Gastrocnemius medialis (tissue), 4 donors: ENCODE measurements at regions of chr1 and their contacts with region 1.

Region 1: GRCh38 chr1:224356685-224357625 is at the start of gene CNIH4:
- DNase-seq: peak; percentile 90 to 93
- ATAC-seq: peak; percentile 98
- H3K4me3 ChIP-seq: peak within 1 kb of the TSS; percentile 72 to 89 (median 88)
- H3K27ac ChIP-seq: peak within 1 kb of the TSS; percentile 85 to 95 (median 89)
- H3K4me1 ChIP-seq: peaks cover 23 to 33% of the 10 kb centered on the region in 2 donors
- H3K27me3 ChIP-seq: no peaks in the 10 kb centered on the region
- CTCF ChIP-seq: no peak
- POLR2A ChIP-seq: peak; percentile 93 to 94
- total RNA-seq, gene CNIH4: 24.5 to 58.5 (median 39.1) TPM

Region 2: GRCh38 chr1:224182866-224183590 is 173.9 kb before region 1 on chr1 and contains the start of gene DEGS1:
- in situ Hi-C with region 1: no loop called
- intact Hi-C with region 1: loop called (anchors 2 kb)
- DNase-seq: peak; percentile 63 to 82
- ATAC-seq: peak; percentile 92 to 94
- H3K4me3 ChIP-seq: peak within 1 kb of the TSS; percentile 69 to 98 (median 88)
- H3K27ac ChIP-seq: peak within 1 kb of the TSS; percentile 82 to 99 (median 96)
- H3K4me1 ChIP-seq: peaks cover 10 to 19% of the 10 kb centered on the region in 2 donors
- H3K27me3 ChIP-seq: no peaks in the 10 kb centered on the region
- CTCF ChIP-seq: no peak
- POLR2A ChIP-seq: peak; percentile 79 to 92
- total RNA-seq, gene DEGS1: 21.5 to 26.3 (median 24.2) TPM

Region 3: GRCh38 chr1:224329842-224330753 is 26.9 kb before region 1 on chr1 and contains the start of gene NVL:
- in situ Hi-C with region 1: no loop called
- intact Hi-C with region 1: loop called (anchors 1 kb)
- DNase-seq: peak; percentile 78 to 82
- ATAC-seq: peak; percentile 96 to 97
- H3K4me3 ChIP-seq: peak within 1 kb of the TSS; percentile 87 to 96 (median 89)
- H3K27ac ChIP-seq: peak within 1 kb of the TSS; percentile 87 to 95 (median 91)
- H3K4me1 ChIP-seq: peaks cover 17 to 19% of the 10 kb centered on the region in 2 donors
- H3K27me3 ChIP-seq: no peaks in the 10 kb centered on the region
- CTCF ChIP-seq: no peak
- POLR2A ChIP-seq: peak; percentile 50 to 53
- total RNA-seq, gene NVL: 6.5 to 32.5 (median 7.7) TPM